ENCODE measurements at regions of chr14 and their contacts with region 1.

Region 1: DNA sequence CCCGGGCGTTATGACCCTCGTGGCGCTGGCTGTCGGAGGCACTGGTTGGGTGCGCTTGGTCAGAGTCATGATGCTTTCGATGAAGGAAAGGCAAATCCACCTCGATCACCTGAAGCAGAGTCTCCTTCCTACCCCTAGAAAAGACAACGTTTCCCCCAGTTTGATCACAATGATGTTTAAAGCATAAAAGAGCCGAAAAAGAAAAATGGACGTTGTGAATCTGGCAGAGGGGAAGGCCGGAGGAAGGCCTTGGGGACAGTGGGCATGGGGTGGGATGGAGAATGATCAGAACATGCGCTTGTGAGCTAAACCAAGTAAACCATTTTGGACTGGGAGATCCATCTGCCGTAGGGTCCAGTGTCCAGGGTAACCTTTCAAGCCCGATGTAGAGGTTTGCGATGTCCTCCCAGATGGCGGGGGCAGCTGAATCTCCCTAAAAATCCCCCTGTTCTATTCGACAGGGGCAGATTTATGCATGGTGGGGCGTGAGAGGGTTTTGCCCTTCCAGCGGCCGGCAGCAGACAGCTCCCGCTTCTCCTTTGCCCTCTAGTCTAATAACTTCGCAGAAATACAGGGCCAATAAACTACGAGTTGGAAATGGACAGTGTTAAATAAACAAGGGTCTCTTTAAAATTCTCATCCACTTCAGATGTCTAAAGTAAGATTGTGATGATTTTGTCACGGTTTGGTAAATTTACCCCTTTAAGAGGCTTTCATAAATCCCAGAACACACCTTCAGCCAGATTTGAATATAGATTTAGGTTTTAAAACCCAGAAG is 2.3 kb upstream of the OTX2 start:
- DNase-seq: no peak
- ATAC-seq: no peak
- H3K4me3 ChIP-seq: no peak overlapping the region
- H3K4me3 Mint-ChIP-seq: no peak overlapping the region
- H3K27ac ChIP-seq: no peak overlapping the region
- H3K27ac Mint-ChIP-seq: no peak overlapping the region
- H3K4me1 ChIP-seq: peaks cover 0 to 5% of the 10 kb centered on the region in 2 experiments
- H3K4me1 Mint-ChIP-seq: peaks cover 20 to 22% (median 21%) of the 10 kb centered on the region in 3 donors
- H3K27me3 ChIP-seq: peaks cover 27 to 68% of the 10 kb centered on the region in 2 experiments
- H3K27me3 Mint-ChIP-seq: peaks cover 55 to 69% of the 10 kb centered on the region in 2 donors

Region 2: DNA sequence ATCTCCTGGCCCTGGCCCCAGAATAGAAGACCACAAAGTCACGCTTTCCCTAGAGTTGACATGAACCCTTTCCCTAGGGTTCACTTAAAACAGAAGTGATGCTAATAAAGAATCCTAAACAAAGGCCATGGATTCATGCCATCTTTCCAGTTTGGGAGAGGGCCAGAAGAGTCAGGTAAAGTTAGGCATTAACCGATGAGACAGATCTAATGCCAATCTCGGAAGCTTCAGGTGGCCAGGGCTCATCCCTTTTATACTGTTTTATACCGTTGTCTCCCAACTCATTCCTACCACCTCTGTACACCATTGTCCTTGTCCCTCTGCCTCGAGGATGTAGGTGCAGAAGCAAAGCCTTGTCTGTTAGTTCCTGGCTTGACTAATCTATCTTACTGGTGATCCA is 1364.6 kb after region 1 on chr14:
- CTCF ChIA-PET with region 1: interaction called in 1 of 2 experiments, 12 read pairs
- POLR2A ChIA-PET with region 1: no interaction called
- DNase-seq: no peak
- ATAC-seq: no peak
- H3K4me3 ChIP-seq: no peak overlapping the region
- H3K4me3 Mint-ChIP-seq: no peak overlapping the region
- H3K27ac ChIP-seq: no peak overlapping the region
- H3K27ac Mint-ChIP-seq: no peak overlapping the region
- H3K4me1 ChIP-seq: no peaks in the 10 kb centered on the region
- H3K4me1 Mint-ChIP-seq: no peaks in the 10 kb centered on the region
- H3K27me3 ChIP-seq: peaks cover 0 to 4% of the 10 kb centered on the region in 2 experiments
- H3K27me3 Mint-ChIP-seq: peaks cover 10 to 23% of the 10 kb centered on the region in 2 donors